ENCODE measurements at regions of chr2 and their contacts with region 1.

Region 1: DNA sequence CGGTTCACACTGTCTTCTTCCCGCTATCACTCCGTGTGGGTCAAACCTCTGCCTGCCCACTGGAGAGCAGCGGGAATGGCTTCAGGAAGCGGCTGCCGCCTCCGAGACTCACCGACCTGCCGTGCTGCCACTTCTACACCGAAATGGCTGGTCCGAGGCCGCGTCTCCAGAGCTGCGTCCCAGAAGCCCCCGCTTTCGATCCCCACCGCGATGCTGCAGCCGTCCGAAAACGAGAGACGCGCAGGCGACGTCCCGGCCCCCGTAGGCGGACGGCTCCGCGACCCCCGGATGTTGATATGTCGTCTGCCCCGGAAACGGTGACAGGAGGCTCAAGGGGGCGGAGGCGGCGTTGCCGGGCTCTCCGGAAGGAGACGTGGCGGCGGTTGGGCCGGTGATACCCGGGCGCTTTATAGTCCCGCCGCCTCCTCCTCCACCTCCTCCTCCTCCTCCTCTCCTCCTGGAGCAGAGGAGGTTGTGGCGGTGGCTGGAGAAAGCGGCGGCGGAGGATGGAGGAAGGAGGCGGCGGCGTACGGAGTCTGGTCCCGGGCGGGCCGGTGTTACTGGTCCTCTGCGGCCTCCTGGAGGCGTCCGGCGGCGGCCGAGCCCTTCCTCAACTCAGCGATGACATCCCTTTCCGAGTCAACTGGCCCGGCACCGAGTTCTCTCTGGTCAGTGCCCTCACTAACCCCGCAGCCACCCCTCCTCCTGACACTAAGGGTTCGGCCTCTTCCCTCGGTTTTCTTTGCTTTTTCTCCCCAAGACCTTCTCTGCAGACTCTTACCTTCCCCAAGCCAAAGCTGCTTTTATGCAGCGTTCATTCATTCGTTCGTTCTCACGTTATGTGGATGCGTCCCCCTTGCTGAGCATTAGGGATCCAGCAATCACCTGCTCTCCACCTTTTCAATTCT is at the starts of genes ASB3 and ERLEC1:
- DNase-seq: peak; percentile 82
- H3K4me3 Mint-ChIP-seq: peak within 1 kb of the TSS; percentile 83
- H3K27ac Mint-ChIP-seq: peak within 1 kb of the TSS; percentile 62
- H3K4me1 Mint-ChIP-seq: peaks cover 12% of the 10 kb centered on the region
- H3K27me3 Mint-ChIP-seq: no peaks in the 10 kb centered on the region
- CTCF ChIP-seq: no peak
- total RNA-seq, gene ASB3: 19.7 and 20.3 TPM in 2 replicates
- total RNA-seq, gene ERLEC1: 51.4 and 68.1 TPM in 2 replicates

Region 2: DNA sequence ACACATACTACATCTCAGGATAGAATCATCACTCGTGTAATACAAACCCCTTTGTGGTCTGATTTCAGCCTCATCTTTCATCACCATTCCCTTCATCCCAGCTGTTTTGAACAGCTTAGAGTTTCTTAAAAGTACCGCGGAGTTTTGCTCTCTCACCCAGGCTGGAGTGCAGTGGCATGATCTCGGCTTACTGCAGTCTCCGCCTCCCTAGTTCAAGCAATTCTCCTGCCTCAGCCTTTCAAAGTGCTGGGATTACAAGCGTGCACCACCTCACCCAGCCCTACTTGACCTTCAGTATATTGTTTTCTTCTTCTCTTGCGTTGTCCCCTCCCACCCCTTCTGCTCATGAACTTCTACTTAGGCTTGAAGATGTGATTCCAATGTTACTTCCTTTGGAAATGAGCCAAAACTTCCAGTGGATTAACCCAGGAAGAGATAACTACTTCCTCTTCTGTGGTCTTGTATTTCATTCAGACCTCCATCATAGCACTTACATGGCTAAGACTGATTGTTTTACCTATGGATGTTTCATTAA is 15.7 kb after region 1 on chr2:
- CTCF ChIA-PET with region 1: no interaction called
- POLR2A ChIA-PET with region 1: interaction called, 23 read pairs
- intact Hi-C with region 1: no loop called
- DNase-seq: no peak
- H3K4me3 Mint-ChIP-seq: no peak overlapping the region
- H3K27ac Mint-ChIP-seq: no peak overlapping the region
- H3K4me1 Mint-ChIP-seq: no peaks in the 10 kb centered on the region
- H3K27me3 Mint-ChIP-seq: no peaks in the 10 kb centered on the region
- CTCF ChIP-seq: no peak

Region 3: DNA sequence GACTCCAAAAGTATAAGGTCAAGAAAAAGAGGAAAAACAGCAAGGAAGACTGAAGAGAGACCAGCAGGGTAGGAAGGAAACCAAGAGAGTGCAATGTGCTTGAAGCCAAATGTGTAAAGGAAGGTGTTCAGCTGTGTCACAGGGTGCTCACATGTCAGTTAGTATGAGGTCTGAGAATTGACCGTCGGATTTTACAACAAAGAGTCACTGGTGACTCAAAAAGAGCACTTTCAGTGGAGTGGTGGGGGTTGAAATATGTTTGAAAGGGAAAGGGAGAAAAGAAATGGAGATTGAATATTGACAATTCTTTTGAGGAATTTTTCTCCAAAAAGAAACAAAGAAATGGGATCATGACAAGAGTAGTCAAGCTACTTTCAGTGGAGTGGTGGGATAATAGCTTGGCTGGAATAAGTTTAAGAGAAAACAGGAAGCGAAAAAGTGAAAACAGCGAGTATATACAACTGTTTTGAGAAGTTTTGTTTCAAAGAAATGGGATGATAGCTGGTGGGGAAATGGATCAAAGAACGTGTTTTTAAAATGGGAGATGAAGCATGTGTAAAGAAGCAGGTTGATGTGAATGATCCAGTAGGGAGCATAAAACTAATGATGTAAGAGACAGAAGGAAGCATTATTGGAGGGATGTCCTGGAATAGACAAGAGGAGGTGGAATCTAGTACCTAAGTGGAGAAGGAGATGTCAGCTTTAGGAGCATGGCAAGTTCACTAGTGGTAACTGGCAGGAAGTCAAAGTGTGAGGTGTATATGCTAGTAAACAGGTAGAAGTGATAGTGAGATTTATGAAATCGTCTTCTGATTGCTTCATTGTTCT is 472.7 kb after region 1 on chr2:
- CTCF ChIA-PET with region 1: no interaction called
- POLR2A ChIA-PET with region 1: no interaction called
- intact Hi-C with region 1: no loop called
- DNase-seq: no peak
- H3K4me3 Mint-ChIP-seq: no peak overlapping the region
- H3K27ac Mint-ChIP-seq: no peak overlapping the region
- H3K4me1 Mint-ChIP-seq: no peaks in the 10 kb centered on the region
- H3K27me3 Mint-ChIP-seq: no peaks in the 10 kb centered on the region
- CTCF ChIP-seq: no peak